PC-3 (cell line): ENCODE measurements at regions of chr7 and their contacts with region 1.

Region 1: GRCh38 chr7:150876817-150877526 is 24.7 kb downstream of the AOC1 start:
- DNase-seq: peak; percentile 72
- ATAC-seq: peak; percentile 60
- H3K4me3 ChIP-seq: no peak overlapping the region
- H3K27ac ChIP-seq: no peak overlapping the region
- H3K4me1 ChIP-seq: no peaks in the 10 kb centered on the region
- H3K27me3 ChIP-seq: peaks cover 11% of the 10 kb centered on the region; the same call in 1 of the 2 replicates
- CTCF ChIP-seq: peak; percentile 72

Region 2: GRCh38 chr7:150695654-150696053 is 181.3 kb before region 1 on chr7:
- CTCF ChIA-PET with region 1: no interaction called
- POLR2A ChIA-PET with region 1: no interaction called
- intact Hi-C with region 1: no loop called
- DNase-seq: no peak
- ATAC-seq: no peak
- H3K4me3 ChIP-seq: no peak overlapping the region
- H3K27ac ChIP-seq: no peak overlapping the region
- H3K4me1 ChIP-seq: no peaks in the 10 kb centered on the region
- H3K27me3 ChIP-seq: peaks cover 18% of the 10 kb centered on the region
- CTCF ChIP-seq: no peak

Region 3: DNA sequence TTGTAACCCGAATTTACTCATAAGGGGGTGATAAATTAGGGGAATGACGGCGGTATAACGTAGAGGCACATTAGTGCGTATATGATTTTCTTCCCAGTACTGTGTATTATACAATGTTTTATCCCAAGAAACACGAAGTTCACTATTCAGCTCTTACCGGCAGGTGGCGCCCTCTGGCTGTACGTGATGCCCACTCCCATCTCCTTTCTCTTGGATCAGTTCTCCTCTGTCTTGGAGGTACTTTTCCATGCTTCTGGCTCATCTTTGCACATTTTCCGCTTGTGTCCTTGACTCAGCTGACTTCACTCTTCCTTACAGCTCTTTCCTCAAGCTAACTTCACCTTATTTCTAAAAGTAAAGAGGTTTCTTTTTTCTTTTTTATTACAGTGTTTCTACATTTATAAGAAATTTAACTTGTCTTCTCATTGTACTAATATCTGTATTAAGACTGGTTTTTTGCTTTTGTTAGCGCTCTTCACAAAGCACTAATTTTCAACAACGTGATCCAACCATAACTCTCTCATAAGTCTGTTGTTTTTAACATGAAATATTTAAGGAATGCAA is 98.2 kb before region 1 on chr7:
- CTCF ChIA-PET with region 1: no interaction called
- POLR2A ChIA-PET with region 1: no interaction called
- intact Hi-C with region 1: loop called (anchors 1 kb)
- DNase-seq: peak; percentile 78
- ATAC-seq: peak; percentile 96
- H3K4me3 ChIP-seq: no peak overlapping the region
- H3K27ac ChIP-seq: no peak overlapping the region
- H3K4me1 ChIP-seq: no peaks in the 10 kb centered on the region
- H3K27me3 ChIP-seq: peaks cover 44% of the 10 kb centered on the region
- CTCF ChIP-seq: peak; percentile 89

Region 4: DNA sequence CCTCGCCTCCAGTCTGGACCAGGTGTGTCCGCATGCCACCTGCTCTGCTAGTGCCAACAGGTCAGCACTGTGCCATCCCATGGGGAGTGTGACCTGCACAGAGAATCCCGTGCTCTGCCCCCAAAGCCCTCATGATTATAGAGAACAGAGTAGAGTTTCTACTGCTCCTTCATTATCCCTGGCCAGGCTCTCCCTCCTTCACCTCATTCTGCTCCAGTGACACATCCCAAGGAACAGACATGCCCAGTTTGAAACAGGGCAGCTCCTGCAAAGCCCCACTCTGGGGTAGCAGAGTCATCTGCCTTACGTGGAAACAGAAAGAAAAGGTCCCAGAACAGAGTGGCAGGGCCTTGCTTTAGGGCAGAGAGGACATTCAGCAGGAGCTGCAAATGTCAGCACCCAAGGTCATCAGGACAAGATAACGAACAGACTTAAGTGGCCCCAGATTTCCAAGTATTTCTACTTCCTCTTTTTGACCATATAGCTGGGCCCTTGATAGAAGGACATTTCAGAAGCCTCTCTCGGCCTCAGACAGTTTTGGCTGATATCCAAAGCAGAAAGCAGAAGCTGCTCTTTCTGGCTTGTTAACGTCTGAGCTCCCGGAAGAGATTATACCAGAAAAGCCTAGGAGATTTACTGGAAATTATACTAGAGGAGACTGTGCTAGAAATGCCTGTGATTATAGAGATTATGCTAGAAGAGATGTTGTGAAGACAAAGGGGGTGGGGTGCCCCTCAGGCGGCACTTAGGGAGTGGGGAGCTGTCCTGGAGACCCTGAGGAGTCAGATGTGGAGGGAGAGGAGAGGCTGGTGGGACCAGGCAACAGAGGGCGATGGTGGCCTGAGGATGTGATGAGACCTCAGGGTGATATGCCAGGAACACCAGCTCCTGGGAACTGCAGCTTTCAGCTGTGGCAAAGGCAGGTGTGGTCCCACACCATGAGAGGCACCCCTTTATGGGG is 89.4 kb before region 1 on chr7:
- CTCF ChIA-PET with region 1: interaction called, 10 read pairs
- POLR2A ChIA-PET with region 1: no interaction called
- intact Hi-C with region 1: no loop called
- DNase-seq: no peak
- ATAC-seq: no peak
- H3K4me3 ChIP-seq: no peak overlapping the region
- H3K27ac ChIP-seq: no peak overlapping the region
- H3K4me1 ChIP-seq: no peaks in the 10 kb centered on the region
- H3K27me3 ChIP-seq: peaks cover 92% of the 10 kb centered on the region
- CTCF ChIP-seq: no peak

Region 5: DNA sequence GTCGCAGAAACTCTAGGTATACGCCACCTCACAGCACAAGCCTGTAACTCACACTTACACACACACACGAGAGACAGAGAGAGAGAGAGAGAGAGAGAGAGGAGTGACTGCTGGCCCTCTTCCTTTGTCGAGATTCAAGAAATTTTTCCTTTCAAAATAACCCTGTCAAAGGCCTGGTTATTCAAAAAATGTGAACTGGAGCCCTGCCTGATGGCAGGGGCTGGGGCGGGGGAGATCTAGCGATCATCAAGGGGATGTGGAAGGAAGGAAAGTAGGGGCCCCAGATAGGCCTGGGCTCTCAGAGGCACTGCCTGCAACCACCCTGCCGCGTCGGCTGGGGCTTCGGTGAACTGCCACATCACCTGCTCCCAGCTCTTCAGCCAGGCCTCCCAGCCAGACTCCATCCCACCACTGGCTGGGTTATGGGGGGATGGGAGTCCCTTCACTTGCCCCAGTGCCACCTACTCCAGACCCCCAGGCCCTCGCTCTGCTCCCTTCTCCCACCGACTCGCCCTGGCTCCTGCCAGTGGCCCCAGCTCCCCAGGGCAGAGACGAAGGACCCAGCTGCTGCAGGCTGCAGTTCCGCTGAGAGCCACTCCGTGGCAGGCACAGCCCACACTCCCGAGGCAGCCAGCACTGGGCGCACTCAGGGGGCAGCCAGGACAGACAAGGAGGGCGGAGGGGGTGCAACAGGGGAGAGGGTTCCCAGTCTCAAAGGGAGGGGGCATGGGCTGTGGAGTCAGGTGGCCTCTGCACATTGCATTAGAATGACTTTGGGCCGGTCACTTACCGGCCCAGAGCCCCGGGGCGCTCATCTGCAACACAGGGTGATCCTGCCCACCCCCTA is 85.8 kb after region 1 on chr7:
- CTCF ChIA-PET with region 1: no interaction called
- POLR2A ChIA-PET with region 1: no interaction called
- intact Hi-C with region 1: no loop called
- DNase-seq: peak; percentile 39
- ATAC-seq: peak; percentile 86
- H3K4me3 ChIP-seq: no peak overlapping the region
- H3K27ac ChIP-seq: no peak overlapping the region
- H3K4me1 ChIP-seq: no peaks in the 10 kb centered on the region
- H3K27me3 ChIP-seq: peaks cover 6% of the 10 kb centered on the region; the same call in 1 of the 2 replicates
- CTCF ChIP-seq: peak; percentile 87